ENCODE measurements at regions of chr5 and their contacts with region 1.

Region 1: GRCh38 chr5:173972925-173973615 is 15.9 kb upstream of the C5orf47 start:
- DNase-seq: peak; percentile 54
- H3K4me3 ChIP-seq: peak overlapping the region; percentile 42 to 48 (median 43)
- H3K27ac ChIP-seq: no peak overlapping the region
- H3K4me1 ChIP-seq: peaks cover 7% of the 10 kb centered on the region
- H3K27me3 ChIP-seq: no peaks in the 10 kb centered on the region
- CTCF ChIP-seq: peak; percentile 80 to 84

Region 2: GRCh38 chr5:173293817-173294672 is 679.0 kb before region 1 on chr5:
- CTCF ChIA-PET with region 1: no interaction called
- dilution Hi-C with region 1: no loop called
- in situ Hi-C with region 1: loop called in 1 of 2 experiments (anchors 10 kb)
- intact Hi-C with region 1: loop called (anchors 1 kb)
- DNase-seq: peak; percentile 65
- H3K4me3 ChIP-seq: no peak overlapping the region
- H3K27ac ChIP-seq: no peak overlapping the region
- H3K4me1 ChIP-seq: peaks cover 28% of the 10 kb centered on the region
- H3K27me3 ChIP-seq: no peaks in the 10 kb centered on the region
- CTCF ChIP-seq: peak; percentile 88 to 91

Region 3: GRCh38 chr5:173615884-173616576 is 357.0 kb before region 1 on chr5:
- CTCF ChIA-PET with region 1: interaction called, 7 read pairs
- dilution Hi-C with region 1: loop called (anchors 25 kb)
- in situ Hi-C with region 1: loop called (anchors 5 kb)
- intact Hi-C with region 1: loop called (anchors 1 kb)
- DNase-seq: peak; percentile 66
- H3K4me3 ChIP-seq: peak overlapping the region; percentile 46 to 88 (median 63)
- H3K27ac ChIP-seq: peak overlapping the region; percentile 73
- H3K4me1 ChIP-seq: peaks cover 16% of the 10 kb centered on the region
- H3K27me3 ChIP-seq: no peaks in the 10 kb centered on the region
- CTCF ChIP-seq: peak; percentile 65 to 80

Region 4: DNA sequence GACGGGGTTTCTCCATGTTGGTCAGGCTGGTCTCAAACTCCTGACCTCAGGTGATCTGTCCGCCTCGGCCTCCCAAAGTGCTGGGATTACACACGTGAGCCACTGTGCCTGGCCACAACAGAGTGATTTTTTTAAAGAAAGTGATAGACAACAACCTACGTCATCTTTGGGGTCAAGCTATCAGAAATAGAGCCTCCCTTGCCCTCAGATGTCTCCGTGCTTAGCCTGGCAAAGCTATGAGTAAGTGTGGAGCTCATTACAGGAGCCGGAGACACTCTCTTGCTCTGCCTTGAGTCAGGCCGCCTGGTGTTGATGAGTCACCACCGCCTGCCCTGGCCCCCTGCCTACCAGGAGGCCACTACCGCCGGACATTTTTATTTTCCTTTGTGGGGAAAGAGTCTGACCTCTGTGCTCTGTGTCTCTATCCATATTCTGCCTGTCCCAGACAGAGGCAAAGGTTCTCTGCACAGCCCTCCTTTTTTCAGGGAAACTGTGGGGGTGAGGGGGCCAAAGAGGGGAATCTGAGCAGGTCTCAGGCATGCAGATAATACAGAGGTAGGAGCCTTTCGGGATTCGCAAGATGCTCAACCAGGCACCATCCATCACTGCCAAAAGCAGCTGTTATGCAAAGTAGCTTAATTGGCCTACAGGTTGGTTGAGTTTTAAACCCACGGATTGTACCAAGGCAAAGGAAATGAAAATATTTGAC is 208.6 kb before region 1 on chr5:
- CTCF ChIA-PET with region 1: no interaction called
- dilution Hi-C with region 1: no loop called
- in situ Hi-C with region 1: no loop called
- intact Hi-C with region 1: loop called (anchors 1 kb)
- DNase-seq: peak; percentile 92
- H3K4me3 ChIP-seq: no peak overlapping the region
- H3K27ac ChIP-seq: peak overlapping the region; percentile 17
- H3K4me1 ChIP-seq: peaks cover 19% of the 10 kb centered on the region
- H3K27me3 ChIP-seq: no peaks in the 10 kb centered on the region
- CTCF ChIP-seq: no peak

Region 5: DNA sequence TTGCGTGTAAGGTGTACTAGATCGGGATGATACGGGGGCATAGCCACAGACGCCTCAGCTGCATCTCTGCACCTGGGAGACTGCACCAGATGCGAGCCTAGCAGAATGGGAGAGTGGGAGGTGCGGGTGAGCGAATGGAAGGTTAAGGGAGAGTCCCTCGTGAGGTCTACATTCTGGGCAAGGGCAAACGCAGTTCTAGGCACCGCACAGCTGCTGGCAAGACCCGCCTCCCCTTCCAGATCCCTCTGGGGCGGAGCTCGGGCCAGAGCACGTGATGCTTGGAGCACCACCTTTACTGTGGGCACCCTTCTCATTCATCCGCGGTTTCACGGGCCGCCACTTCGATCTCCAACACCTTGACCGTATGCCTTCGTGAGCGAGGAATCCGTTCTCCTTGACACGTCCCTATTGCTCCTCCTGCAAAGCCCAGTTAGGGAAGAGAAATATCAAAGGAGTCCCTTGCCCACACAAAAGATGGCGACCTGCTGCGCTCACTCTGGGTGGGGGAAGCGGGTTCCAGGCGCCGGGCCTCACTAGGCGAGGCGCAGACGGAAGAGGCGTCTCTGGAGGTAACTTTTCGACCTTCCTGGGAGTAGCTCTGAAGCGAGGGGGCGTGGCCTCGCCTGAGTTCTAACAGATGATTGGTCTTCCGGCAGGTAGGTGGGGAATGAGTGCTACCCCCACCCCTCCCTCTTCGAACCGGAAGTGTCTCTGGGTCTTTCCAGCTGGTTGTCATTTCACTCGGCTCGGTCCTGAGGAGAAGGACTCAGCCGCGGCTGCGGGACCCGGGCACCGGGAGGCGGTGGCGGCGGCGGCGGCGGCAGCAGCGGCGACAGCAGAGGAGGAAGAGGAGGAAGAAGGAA is 85.2 kb before region 1 on chr5 and contains the start of gene CPEB4:
- CTCF ChIA-PET with region 1: no interaction called
- dilution Hi-C with region 1: no loop called
- in situ Hi-C with region 1: no loop called
- intact Hi-C with region 1: loop called (anchors 2 kb)
- DNase-seq: peak; percentile 99
- H3K4me3 ChIP-seq: peak within 1 kb of the TSS; percentile 70 to 92 (median 73)
- H3K27ac ChIP-seq: peak within 1 kb of the TSS; percentile 92
- H3K4me1 ChIP-seq: peaks cover 22% of the 10 kb centered on the region
- H3K27me3 ChIP-seq: no peaks in the 10 kb centered on the region
- CTCF ChIP-seq: no peak
- total RNA-seq, gene CPEB4: 29.1 to 44.5 TPM

Region 6: GRCh38 chr5:174317259-174317894 is 344.3 kb after region 1 on chr5:
- CTCF ChIA-PET with region 1: no interaction called
- dilution Hi-C with region 1: no loop called
- in situ Hi-C with region 1: no loop called
- intact Hi-C with region 1: loop called (anchors 2 kb)
- DNase-seq: peak; percentile 29
- H3K4me3 ChIP-seq: no peak overlapping the region
- H3K27ac ChIP-seq: no peak overlapping the region
- H3K4me1 ChIP-seq: no peaks in the 10 kb centered on the region
- H3K27me3 ChIP-seq: peaks cover 1% of the 10 kb centered on the region
- CTCF ChIP-seq: peak; percentile 63 to 85